HCT116 (cell line): ENCODE measurements at regions of chr9 and their contacts with region 1.

Region 1: GRCh38 chr9:33264473-33265177 is at the starts of genes BAG1 and CHMP5:
- DNase-seq: peak; percentile 98
- ATAC-seq: peak; percentile 93
- H3K4me3 ChIP-seq: peak within 1 kb of the TSS; percentile 98 to 99
- H3K27ac ChIP-seq: peak within 1 kb of the TSS; percentile 87
- H3K4me1 ChIP-seq: peaks cover 3 to 16% of the 10 kb centered on the region in 2 experiments; a peak in 3 of 4 replicates
- H3K27me3 ChIP-seq: no peaks in the 10 kb centered on the region
- CTCF ChIP-seq: peak in 1 of 3 experiments; percentile 43; a peak in 2 of 6 replicates
- POLR2A ChIP-seq: peak; percentile 31
- RAD21 ChIP-seq: no peak
- total RNA-seq, gene BAG1: 58.2 TPM
- total RNA-seq, gene CHMP5: 61.8 TPM

Region 2: DNA sequence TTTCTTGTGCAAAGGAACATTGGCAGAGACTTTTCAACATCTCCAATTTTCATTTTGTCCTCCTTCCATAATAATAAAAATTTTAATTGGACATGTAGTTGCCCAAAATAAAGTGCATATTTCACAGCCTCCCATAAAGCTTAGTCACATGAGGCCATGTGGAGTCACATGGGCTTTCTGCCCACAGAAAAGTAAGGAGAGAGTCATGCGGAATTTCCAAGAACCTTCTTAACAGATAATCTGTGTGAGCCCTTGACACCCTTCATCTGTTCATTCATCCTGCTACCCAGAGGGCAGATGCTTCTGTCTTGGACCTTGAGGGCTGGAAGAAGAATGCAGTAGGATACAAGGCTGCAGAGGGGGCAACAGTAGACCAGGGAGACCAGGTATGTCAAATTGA is 323.9 kb before region 1 on chr9:
- CTCF ChIA-PET with region 1: no interaction called
- POLR2A ChIA-PET with region 1: no interaction called
- RAD21 ChIA-PET with region 1: no interaction called
- intact Hi-C with region 1: no loop called
- DNase-seq: no peak
- ATAC-seq: no peak
- H3K4me3 ChIP-seq: no peak overlapping the region
- H3K27ac ChIP-seq: no peak overlapping the region
- H3K4me1 ChIP-seq: no peaks in the 10 kb centered on the region
- H3K27me3 ChIP-seq: no peaks in the 10 kb centered on the region
- CTCF ChIP-seq: no peak
- POLR2A ChIP-seq: no peak
- RAD21 ChIP-seq: no peak

Region 3: GRCh38 chr9:33017283-33018041 is 247.2 kb before region 1 on chr9:
- CTCF ChIA-PET with region 1: no interaction called
- POLR2A ChIA-PET with region 1: no interaction called
- RAD21 ChIA-PET with region 1: no interaction called
- intact Hi-C with region 1: no loop called
- DNase-seq: no peak
- ATAC-seq: no peak
- H3K4me3 ChIP-seq: no peak overlapping the region
- H3K27ac ChIP-seq: no peak overlapping the region
- H3K4me1 ChIP-seq: no peaks in the 10 kb centered on the region
- H3K27me3 ChIP-seq: no peaks in the 10 kb centered on the region
- CTCF ChIP-seq: no peak
- POLR2A ChIP-seq: no peak
- RAD21 ChIP-seq: no peak

Region 4: DNA sequence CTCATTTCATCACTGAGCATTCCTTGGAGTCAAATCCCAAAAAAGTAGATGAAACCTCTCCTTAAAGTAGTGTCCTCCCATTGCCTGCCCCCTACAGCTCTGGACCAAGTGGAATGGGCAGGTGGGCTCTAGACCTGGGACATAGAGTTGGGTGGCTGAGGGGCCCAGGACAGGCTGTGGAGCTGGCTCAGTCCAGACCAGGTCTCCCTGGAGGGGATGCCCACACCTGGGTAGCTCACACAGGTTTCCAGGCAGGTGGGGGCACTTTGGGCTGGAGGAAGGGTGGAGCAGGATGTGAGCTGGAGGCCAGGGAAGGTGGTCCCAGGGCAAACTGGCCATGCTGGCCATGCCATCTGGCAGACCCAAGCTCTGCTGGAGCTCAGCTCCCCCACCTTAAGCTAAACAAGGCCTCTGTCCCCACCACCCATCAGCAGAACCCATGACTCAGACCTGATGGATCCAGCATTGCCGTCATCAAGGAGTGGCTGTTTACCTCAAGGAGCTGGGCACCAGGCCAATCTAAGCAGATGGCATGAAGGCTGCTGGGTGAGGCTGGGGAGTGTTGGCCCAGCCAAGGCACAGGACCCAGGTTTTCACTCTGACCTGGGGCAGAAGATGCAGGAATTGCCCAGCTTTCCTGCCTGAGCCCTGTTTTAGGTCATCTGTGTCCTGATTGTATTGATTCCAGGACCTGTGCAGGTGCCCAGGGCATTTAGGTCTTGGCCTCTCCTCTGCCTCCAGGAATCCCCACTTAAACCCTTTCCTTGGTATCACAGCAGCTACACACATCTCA is 30.7 kb before region 1 on chr9:
- CTCF ChIA-PET with region 1: no interaction called
- POLR2A ChIA-PET with region 1: interaction called, 3 read pairs
- RAD21 ChIA-PET with region 1: no interaction called
- intact Hi-C with region 1: loop called (anchors 1 kb)
- DNase-seq: peak; percentile 95
- ATAC-seq: peak; percentile 74
- H3K4me3 ChIP-seq: peak overlapping the region in 1 of 2 experiments; percentile 27; a peak in 1 of 4 replicates
- H3K27ac ChIP-seq: peak overlapping the region; percentile 35; the same call in 1 of the 2 replicates
- H3K4me1 ChIP-seq: peaks cover 52 to 70% of the 10 kb centered on the region in 2 experiments
- H3K27me3 ChIP-seq: no peaks in the 10 kb centered on the region
- CTCF ChIP-seq: no peak
- POLR2A ChIP-seq: no peak
- RAD21 ChIP-seq: no peak

Region 5: DNA sequence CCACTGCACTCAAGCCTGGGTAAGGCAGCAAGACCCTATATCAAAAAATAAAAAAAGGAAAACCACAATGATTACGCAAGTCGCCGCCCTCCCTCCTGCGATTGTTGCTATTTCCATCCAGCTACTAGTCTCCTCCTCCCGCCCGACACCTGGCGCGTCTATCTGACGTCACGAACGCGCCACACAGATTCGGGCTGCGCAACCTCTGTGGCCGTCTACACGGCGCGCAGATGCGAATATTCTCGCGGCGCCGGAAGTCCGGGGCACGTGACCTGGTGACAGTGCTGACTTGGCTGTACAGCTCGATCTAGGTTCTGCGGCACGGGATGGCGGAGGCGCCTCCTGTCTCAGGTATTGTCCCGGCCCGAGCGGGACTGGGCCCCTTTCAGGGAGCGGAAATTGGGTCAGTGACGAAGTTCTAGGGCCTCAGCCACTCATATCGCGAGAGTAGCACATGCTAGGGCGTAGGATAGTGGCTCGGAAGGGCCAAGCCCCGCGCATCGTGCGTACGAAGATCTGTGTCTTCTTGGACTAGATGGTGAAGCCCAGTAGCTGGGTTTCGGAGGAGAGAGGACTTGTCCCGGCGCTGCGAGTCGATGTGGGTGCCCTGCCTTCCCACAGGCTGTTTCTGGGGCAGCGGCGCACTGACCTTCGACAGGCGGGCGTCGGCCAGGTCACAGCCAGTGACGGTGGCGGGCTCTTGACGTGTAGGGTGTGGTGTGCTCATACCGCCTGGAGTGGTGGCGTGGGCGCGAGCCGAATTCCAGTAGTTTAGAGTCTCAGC is 25.8 kb after region 1 on chr9 and contains the start of gene NFX1:
- CTCF ChIA-PET with region 1: interaction called, 4 read pairs
- POLR2A ChIA-PET with region 1: no interaction called
- RAD21 ChIA-PET with region 1: no interaction called
- intact Hi-C with region 1: loop called (anchors 1 kb)
- DNase-seq: peak; percentile 95
- ATAC-seq: peak; percentile 94
- H3K4me3 ChIP-seq: peak within 1 kb of the TSS; percentile 80 to 85
- H3K27ac ChIP-seq: peak within 1 kb of the TSS; percentile 83
- H3K4me1 ChIP-seq: peaks cover 5 to 22% of the 10 kb centered on the region in 2 experiments; a peak in 2 of 4 replicates
- H3K27me3 ChIP-seq: no peaks in the 10 kb centered on the region
- CTCF ChIP-seq: no peak
- POLR2A ChIP-seq: peak; percentile 68
- RAD21 ChIP-seq: no peak
- total RNA-seq, gene NFX1: 31.7 TPM